Activated CD8-positive, alpha-beta T cell treated with anti-CD3 and anti-CD28 coated beads for 36 hours (primary cell): ENCODE measurements at regions of chr17 and their contacts with region 1.

Region 1: GRCh38 chr17:57995076-57995956 is 7.3 kb upstream of the VEZF1 start:
- DNase-seq: peak; percentile 76
- ATAC-seq: peak; percentile 89
- H3K4me3 Mint-ChIP-seq: no peak overlapping the region
- H3K27ac Mint-ChIP-seq: peak overlapping the region; percentile 40
- H3K4me1 Mint-ChIP-seq: peaks cover 72% of the 10 kb centered on the region
- H3K27me3 Mint-ChIP-seq: no peaks in the 10 kb centered on the region
- CTCF ChIP-seq: peak; percentile 73

Region 2: DNA sequence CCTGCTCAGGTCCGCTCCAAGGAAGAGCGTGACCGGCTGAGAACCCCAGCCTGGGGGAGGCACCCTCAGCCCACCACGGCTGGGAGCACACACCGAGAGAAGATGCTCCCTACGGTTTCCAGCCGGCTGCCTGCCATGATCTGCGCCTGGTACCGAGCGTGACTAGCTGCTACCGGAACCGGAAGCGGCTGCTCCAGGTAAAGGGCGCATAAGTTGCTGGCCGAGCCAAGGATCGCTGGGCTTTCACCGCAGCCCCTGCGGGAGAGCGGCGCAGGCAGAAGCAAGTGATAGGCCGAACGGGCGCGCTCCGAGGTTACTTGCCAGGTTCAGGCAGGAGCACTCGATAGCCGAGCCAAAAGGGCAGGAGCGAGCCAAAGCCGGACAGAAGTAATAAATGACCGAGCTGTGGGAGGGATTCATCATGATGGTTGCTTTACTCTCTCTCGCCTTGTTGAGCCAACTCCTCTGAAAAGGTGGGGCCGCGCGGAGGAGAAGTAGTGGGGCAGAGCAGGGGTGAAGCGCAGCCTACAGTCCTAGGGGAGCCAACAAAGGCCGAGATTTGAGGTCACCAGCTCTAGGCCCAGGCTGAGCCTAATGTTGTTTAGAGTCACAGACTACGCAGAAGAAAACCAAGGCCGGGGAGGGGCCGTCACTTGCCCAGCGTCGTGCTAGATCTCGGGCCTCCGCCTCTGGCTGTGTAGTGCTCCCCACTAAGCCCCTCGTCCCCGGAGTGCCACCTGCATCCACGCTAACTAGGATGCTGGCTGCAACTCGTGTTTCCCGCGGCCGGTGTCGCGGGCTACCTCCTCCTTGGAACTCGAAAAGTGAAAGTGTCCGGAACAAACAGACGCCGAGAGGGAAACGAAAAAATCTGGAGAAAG is 145.2 kb before region 1 on chr17 and contains the start of gene MRPS23:
- CTCF ChIA-PET with region 1: interaction called, 177 read pairs
- POLR2A ChIA-PET with region 1: interaction called, 9 read pairs
- intact Hi-C with region 1: loop called (anchors 5 kb)
- DNase-seq: peak; percentile 98
- ATAC-seq: peak; percentile 97
- H3K4me3 Mint-ChIP-seq: peak within 1 kb of the TSS; percentile 91
- H3K27ac Mint-ChIP-seq: peak within 1 kb of the TSS; percentile 95
- H3K4me1 Mint-ChIP-seq: peaks cover 30% of the 10 kb centered on the region
- H3K27me3 Mint-ChIP-seq: no peaks in the 10 kb centered on the region
- CTCF ChIP-seq: no peak
- total RNA-seq, gene MRPS23: 69.5 to 70.0 TPM

Region 3: DNA sequence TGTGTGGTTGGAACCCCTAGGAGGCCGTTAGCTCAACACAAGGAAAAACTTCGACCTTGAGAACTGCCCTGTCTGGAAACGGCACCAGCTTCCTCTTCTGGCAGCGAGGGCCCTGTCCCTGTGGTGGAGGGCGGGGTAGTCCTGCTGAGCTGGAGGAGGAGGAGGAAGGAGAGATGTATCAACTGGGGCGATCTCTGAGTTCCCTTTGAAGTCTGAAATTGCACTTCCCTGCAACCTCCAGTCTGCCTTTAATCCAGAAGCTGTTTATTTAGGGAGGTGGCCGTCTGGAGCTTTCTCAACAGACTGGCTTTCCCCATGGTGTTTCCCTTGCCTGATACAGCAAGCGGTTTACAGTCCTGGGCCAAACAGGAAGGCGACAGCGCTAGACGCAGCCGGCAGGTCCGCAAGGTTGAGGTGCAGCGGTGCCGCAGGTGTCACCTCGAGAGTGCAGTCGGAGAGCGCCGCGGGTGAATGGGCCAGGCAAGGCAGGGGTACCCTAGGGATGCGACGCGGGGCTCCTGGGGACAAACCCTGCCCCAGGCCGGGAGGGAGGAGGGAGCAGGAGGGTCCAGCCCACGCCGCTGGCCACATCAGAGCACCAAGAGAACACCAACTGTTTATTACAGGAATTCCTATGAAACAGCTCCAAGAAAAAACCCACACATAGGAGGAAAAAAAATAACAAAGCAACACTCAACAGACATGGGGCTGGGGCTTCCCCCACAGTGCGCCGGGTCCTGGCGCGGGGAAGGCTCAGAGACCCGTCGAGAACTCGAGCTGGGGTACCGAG is 134.1 kb before region 1 on chr17:
- CTCF ChIA-PET with region 1: interaction called, 177 read pairs
- POLR2A ChIA-PET with region 1: interaction called, 15 read pairs
- intact Hi-C with region 1: loop called (anchors 5 kb)
- DNase-seq: peak; percentile 41
- ATAC-seq: peak; percentile 75
- H3K4me3 Mint-ChIP-seq: peak overlapping the region; percentile 62
- H3K27ac Mint-ChIP-seq: no peak overlapping the region
- H3K4me1 Mint-ChIP-seq: peaks cover 13% of the 10 kb centered on the region
- H3K27me3 Mint-ChIP-seq: peaks cover 35% of the 10 kb centered on the region
- CTCF ChIP-seq: no peak

Region 4: DNA sequence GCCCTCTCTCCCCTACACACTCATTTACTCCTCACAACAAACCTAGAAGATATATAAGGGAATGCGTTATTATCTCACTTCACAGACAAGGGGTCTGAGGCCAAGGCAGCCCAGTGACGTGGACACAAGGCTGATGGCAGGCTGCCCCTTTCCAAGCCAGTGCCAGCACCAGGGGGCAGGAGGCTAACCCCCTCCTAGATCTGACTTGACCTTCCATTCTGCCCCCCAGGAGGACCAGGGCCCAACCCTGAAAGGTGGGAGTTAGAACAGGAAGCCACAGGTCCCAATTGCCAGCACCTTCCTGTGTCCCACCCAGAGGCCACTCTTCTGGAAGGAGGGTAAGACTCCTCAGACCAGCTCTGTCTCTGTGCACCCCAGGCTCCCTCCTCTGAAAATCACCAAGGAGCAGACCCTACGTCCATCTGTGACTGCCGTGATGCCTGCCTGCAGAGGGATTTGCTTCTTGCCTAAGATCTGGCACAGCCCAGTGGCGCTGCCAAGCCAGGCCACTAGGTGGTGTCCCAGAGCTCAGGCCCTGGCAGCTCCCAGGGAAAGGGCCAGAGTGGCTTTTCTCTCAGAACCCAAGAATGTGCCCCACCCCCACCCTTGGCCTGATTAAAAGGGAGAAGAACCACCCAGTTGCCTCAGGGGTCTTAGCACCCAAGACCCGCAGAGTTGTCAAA is 103.0 kb before region 1 on chr17:
- CTCF ChIA-PET with region 1: interaction called, 17 read pairs
- POLR2A ChIA-PET with region 1: interaction called, 4 read pairs
- intact Hi-C with region 1: no loop called
- DNase-seq: peak; percentile 88
- ATAC-seq: peak; percentile 99
- H3K4me3 Mint-ChIP-seq: no peak overlapping the region
- H3K27ac Mint-ChIP-seq: no peak overlapping the region
- H3K4me1 Mint-ChIP-seq: no peaks in the 10 kb centered on the region
- H3K27me3 Mint-ChIP-seq: peaks cover 2% of the 10 kb centered on the region
- CTCF ChIP-seq: peak; percentile 87

Region 5: GRCh38 chr17:57955183-57955931 is 40.0 kb before region 1 on chr17 and contains the start of gene CUEDC1:
- CTCF ChIA-PET with region 1: interaction called, 25 read pairs
- POLR2A ChIA-PET with region 1: interaction called, 4 read pairs
- intact Hi-C with region 1: no loop called
- DNase-seq: peak; percentile 63
- ATAC-seq: peak; percentile 74
- H3K4me3 Mint-ChIP-seq: peak within 1 kb of the TSS; percentile 49
- H3K27ac Mint-ChIP-seq: no peak within 1 kb of the TSS
- H3K4me1 Mint-ChIP-seq: peaks cover 24% of the 10 kb centered on the region
- H3K27me3 Mint-ChIP-seq: peaks cover 32% of the 10 kb centered on the region
- CTCF ChIP-seq: peak; percentile 38
- total RNA-seq, gene CUEDC1: 0.29 to 0.40 TPM

Region 6: DNA sequence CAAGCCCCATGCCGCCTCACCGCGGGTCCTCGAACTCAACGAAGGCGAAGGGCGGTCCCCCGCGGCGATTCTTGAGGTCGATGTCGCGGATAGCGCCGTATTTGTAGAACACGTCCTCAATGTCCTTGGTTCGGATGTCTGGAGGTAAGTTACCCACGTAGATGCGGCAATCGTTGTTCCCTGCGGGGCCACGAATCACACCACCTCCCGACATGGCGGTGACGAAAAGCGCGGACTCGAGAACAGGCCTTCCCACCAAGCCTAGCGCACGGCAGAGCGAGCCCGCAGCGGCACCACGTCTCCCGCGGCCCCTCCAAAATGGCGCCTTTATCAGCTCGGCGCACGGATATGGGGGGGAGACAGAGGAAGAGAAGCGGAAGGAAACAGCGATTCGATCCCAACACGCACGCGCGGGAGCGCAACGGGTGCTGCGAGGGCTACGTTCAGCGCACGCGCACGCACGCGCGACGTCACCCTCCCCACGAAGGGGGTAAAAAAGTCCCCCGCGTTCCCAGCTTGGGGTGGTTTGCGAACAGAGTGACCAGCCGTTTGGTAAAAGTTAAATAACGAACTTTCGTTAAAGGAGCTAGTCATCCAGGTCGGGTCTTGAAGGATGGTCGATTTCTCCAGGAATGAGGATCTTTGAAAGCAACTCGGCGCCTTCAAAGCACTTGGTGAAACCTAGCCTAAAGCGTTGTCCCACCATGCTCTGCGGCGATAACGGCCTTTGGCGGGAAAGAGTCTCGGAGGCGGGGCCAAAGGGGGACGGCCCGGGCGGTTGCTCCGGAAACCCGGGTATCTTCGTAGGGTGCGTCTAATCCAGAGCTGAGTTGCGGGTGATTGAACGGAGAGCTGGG is 11.8 kb after region 1 on chr17 and contains the start of gene SRSF1:
- CTCF ChIA-PET with region 1: interaction called, 34 read pairs
- POLR2A ChIA-PET with region 1: interaction called, 230 read pairs
- intact Hi-C with region 1: no loop called
- DNase-seq: peak; percentile 98
- ATAC-seq: peak; percentile 91
- H3K4me3 Mint-ChIP-seq: peak within 1 kb of the TSS; percentile 97
- H3K27ac Mint-ChIP-seq: peak within 1 kb of the TSS; percentile 99
- H3K4me1 Mint-ChIP-seq: peaks cover 40% of the 10 kb centered on the region
- H3K27me3 Mint-ChIP-seq: no peaks in the 10 kb centered on the region
- CTCF ChIP-seq: no peak
- total RNA-seq, gene SRSF1: 333 to 342 TPM

Region 7: GRCh38 chr17:58046239-58047094 is 51.2 kb after region 1 on chr17:
- CTCF ChIA-PET with region 1: no interaction called
- POLR2A ChIA-PET with region 1: no interaction called
- intact Hi-C with region 1: no loop called
- DNase-seq: no peak
- ATAC-seq: no peak
- H3K4me3 Mint-ChIP-seq: no peak overlapping the region
- H3K27ac Mint-ChIP-seq: no peak overlapping the region
- H3K4me1 Mint-ChIP-seq: no peaks in the 10 kb centered on the region
- H3K27me3 Mint-ChIP-seq: peaks cover 14% of the 10 kb centered on the region
- CTCF ChIP-seq: no peak